Panc1 (cell line): ENCODE measurements at regions of chr17 and their contacts with region 1.

Region 1: GRCh38 chr17:77429919-77430752 is 289.4 kb downstream of the SEC14L1 start:
- DNase-seq: no peak
- ATAC-seq: peak; percentile 59
- H3K4me3 ChIP-seq: no peak overlapping the region
- H3K27ac ChIP-seq: peak overlapping the region; percentile 72
- H3K4me1 ChIP-seq: peaks cover 72% of the 10 kb centered on the region
- H3K27me3 ChIP-seq: no peaks in the 10 kb centered on the region
- CTCF ChIP-seq: peak; percentile 93; the same call in 1 of the 2 replicates

Region 2: GRCh38 chr17:77494664-77495435 is 64.7 kb after region 1 on chr17:
- CTCF ChIA-PET with region 1: interaction called, 4 read pairs
- POLR2A ChIA-PET with region 1: no interaction called
- in situ Hi-C with region 1: no loop called
- intact Hi-C with region 1: loop called (anchors 10 kb)
- DNase-seq: peak; percentile 50
- ATAC-seq: peak; percentile 79
- H3K4me3 ChIP-seq: no peak overlapping the region
- H3K27ac ChIP-seq: no peak overlapping the region; the same call in 1 of the 2 replicates
- H3K4me1 ChIP-seq: peaks cover 9% of the 10 kb centered on the region
- H3K27me3 ChIP-seq: no peaks in the 10 kb centered on the region
- CTCF ChIP-seq: peak; percentile 97

Region 3: GRCh38 chr17:77681861-77682260 is 251.7 kb after region 1 on chr17:
- CTCF ChIA-PET with region 1: no interaction called
- POLR2A ChIA-PET with region 1: no interaction called
- in situ Hi-C with region 1: no loop called
- intact Hi-C with region 1: no loop called
- DNase-seq: no peak
- ATAC-seq: no peak
- H3K4me3 ChIP-seq: no peak overlapping the region
- H3K27ac ChIP-seq: no peak overlapping the region
- H3K4me1 ChIP-seq: no peaks in the 10 kb centered on the region
- H3K27me3 ChIP-seq: peaks cover 24% of the 10 kb centered on the region
- CTCF ChIP-seq: no peak